Heart left ventricle (tissue), 16 donors: ENCODE measurements at regions of chr3 and their contacts with region 1.

Region 1: GRCh38 chr3:151660885-151661284 is 72.8 kb upstream of the AADACL2 start:
- DNase-seq: no peak
- ATAC-seq: no peak
- H3K4me3 ChIP-seq: no peak overlapping the region
- H3K27ac ChIP-seq: no peak overlapping the region
- H3K4me1 ChIP-seq: no peaks in the 10 kb centered on the region
- H3K27me3 ChIP-seq: no peaks in the 10 kb centered on the region
- CTCF ChIP-seq: peak in 5 of 12 donors; percentile 6 to 35 (median 21)
- POLR2A ChIP-seq: no peak

Region 2: GRCh38 chr3:151439652-151440129 is 221.2 kb before region 1 on chr3:
- intact Hi-C with region 1: loop called in 2 of 10 experiments (anchors 10 kb)
- DNase-seq: no peak
- ATAC-seq: peak; percentile 67 to 73 (median 71)
- H3K4me3 ChIP-seq: no peak overlapping the region
- H3K27ac ChIP-seq: no peak overlapping the region
- H3K4me1 ChIP-seq: peaks cover 0 to 1% (median 0%) of the 10 kb centered on the region in 12 donors
- H3K27me3 ChIP-seq: no peaks in the 10 kb centered on the region
- CTCF ChIP-seq: peak; percentile 64 to 86 (median 78)
- POLR2A ChIP-seq: no peak

Region 3: GRCh38 chr3:151477591-151478334 is 183.1 kb before region 1 on chr3:
- intact Hi-C with region 1: loop called in 1 of 10 experiments (anchors 10 kb)
- DNase-seq: no peak
- ATAC-seq: no peak
- H3K4me3 ChIP-seq: no peak overlapping the region
- H3K27ac ChIP-seq: no peak overlapping the region
- H3K4me1 ChIP-seq: peaks cover 0 to 10% (median 0%) of the 10 kb centered on the region in 12 donors
- H3K27me3 ChIP-seq: no peaks in the 10 kb centered on the region
- CTCF ChIP-seq: no peak
- POLR2A ChIP-seq: no peak